IMR-90 (cell line): ENCODE measurements at regions of chr18 and their contacts with region 1.

Region 1: DNA sequence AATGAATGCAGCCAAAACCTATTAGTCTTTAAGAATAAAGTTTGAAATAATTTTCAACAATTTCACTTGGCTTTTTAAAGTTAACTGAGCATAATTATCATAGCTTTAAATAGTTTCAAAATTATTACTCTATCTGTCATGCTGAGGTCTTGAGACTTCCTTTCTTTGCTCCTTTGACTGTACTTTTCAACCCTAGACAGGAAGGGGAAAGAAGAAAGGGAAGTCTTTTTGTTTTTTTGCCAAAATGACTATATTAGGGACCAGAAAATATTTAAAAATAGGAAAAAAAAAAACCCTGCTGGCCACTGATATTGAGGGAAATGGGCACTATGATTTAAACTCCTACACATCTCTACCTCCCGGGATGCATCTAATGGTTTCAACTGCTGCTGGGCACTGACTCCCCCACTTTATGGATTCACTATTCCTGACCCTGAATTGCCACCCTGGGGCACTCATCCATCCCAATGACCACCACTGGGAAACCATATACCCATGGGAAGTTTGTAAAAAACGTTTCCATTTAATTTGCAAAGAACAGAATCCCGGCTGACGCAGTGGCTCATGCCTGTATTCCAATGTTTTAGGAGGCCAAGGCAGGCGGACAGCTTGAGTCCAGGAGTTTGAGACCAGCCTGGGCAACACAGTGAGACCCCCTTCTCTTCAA is 50.5 kb downstream of the GAREM1 start:
- DNase-seq: no peak
- ATAC-seq: no peak
- H3K4me3 ChIP-seq: no peak overlapping the region
- H3K27ac ChIP-seq: no peak overlapping the region
- H3K4me1 ChIP-seq: no peaks in the 10 kb centered on the region
- H3K27me3 ChIP-seq: no peaks in the 10 kb centered on the region
- CTCF ChIP-seq: no peak
- POLR2A ChIP-seq: no peak
- RAD21 ChIP-seq: no peak

Region 2: DNA sequence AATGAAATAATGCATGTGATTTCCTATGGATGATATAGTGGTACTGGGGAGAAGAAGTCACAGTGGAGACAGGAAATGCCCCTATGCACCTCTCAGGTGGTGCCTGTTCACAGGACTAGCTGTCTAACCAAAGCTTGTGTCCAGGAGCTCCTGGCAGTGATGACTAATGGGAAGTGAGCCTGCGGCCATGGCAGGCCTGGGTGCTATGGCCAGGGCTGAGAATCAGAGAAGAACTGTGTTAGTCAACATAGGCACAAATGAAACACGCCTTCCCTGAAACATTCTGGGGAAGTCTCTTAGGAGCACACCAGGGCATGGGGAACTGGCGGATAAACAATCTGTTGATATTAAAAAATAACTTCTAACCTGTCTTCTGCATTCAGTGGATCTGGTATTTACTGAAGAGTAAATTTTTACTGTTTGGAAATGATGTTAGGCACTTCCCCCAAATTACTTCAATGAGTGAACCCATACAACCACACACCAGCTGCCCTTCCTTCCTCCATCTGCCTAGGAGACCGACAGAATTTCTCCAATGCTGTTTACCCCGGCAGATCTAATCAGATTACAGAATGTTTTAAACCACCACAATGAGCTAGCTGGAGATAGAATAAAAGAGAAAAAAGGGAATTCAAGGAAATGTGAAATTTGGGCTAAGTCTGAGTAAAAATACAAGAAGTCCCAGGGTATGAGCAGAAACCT is 163.0 kb before region 1 on chr18:
- CTCF ChIA-PET with region 1: no interaction called
- POLR2A ChIA-PET with region 1: no interaction called
- dilution Hi-C with region 1: no loop called
- in situ Hi-C with region 1: no loop called
- intact Hi-C with region 1: no loop called
- DNase-seq: no peak
- ATAC-seq: no peak
- H3K4me3 ChIP-seq: no peak overlapping the region
- H3K27ac ChIP-seq: no peak overlapping the region
- H3K4me1 ChIP-seq: no peaks in the 10 kb centered on the region
- H3K27me3 ChIP-seq: peaks cover 2% of the 10 kb centered on the region
- CTCF ChIP-seq: no peak
- POLR2A ChIP-seq: no peak
- RAD21 ChIP-seq: no peak

Region 3: DNA sequence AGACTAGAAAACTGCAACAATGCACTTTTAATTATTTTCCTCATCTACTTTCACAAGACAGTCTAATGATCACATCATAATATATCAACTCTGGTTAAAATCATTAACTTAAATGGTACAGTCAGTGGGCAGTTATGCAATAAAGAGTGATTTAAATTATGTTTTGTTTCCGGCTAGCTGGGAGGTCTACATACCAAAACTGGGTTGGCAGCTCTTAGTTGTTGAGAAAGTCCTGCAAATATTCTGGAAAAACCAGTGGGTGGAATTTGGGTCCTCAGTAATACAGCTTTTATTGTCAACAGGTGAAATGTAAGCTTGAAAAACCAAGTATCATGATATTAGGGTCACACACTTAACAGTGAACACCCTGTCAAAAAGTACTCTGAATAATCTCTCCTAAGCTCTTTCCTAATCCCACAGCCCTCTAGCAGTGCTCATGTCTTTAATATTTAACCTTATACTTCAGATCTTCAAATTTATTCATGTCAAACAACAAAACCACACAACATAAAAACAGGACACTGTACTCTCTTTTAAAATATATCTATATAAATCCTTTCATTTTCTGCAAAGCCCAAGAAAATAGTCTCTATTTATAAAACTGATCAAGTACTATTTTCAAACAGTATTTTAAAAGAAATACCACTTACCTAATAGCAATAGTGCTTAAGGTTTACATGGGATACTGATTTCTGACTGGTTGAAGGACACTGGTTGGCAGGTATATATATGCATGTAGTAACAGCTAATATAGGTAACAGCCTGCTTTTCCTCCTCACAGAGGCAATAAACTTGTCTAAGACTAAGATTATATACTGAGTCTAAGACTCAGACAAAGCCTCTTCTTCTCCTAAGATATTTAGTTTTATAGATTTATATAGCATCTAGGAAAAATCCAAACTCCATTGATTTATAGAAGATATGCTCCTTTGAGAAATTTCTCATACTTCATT is 53.4 kb before region 1 on chr18:
- CTCF ChIA-PET with region 1: no interaction called
- POLR2A ChIA-PET with region 1: interaction called, 3 read pairs
- dilution Hi-C with region 1: no loop called
- in situ Hi-C with region 1: no loop called
- intact Hi-C with region 1: loop called (anchors 5 kb)
- DNase-seq: no peak
- ATAC-seq: peak; percentile 46
- H3K4me3 ChIP-seq: no peak overlapping the region
- H3K27ac ChIP-seq: no peak overlapping the region
- H3K4me1 ChIP-seq: peaks cover 4% of the 10 kb centered on the region; the same call in 1 of the 2 replicates
- H3K27me3 ChIP-seq: no peaks in the 10 kb centered on the region
- CTCF ChIP-seq: no peak
- POLR2A ChIP-seq: no peak
- RAD21 ChIP-seq: no peak

Region 4: DNA sequence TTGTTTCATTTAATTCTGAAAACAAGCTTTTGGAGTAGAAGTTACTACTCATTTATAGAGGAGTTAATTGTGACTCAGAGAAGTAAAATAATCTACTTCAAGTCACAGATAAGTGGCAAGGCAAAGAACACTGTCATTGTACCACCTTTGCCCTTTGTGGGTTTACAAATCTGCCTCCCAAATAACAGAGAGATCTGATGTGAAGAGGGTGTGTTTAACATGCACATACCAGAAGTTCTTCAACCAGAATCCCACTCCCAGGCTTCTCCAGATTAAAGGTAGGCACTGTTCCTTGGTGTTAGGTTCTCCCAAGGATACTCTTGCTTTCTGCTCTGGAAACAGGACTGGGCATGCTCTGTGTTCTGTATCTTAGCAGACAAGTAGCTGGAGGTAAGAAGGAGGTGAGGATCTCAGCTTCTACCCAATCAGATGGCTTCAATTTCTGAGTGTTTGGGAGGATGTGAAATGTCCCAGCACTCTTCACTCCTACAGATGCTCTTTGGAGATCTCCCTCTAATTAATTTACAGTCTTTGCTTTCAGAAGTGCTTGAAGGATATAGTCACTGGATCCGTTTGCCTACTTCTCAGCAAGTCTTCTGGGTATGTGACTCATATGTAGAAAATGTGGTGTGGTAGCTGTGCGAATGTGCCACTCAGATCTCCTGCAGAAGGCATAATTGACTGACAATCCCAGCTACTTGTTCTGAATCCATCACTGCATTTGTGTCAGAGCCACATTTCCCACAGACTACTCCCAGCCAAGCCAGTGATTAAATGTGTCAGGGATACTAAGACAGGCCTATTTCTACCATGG is 241.5 kb after region 1 on chr18:
- CTCF ChIA-PET with region 1: no interaction called
- POLR2A ChIA-PET with region 1: no interaction called
- dilution Hi-C with region 1: no loop called
- in situ Hi-C with region 1: no loop called
- intact Hi-C with region 1: no loop called
- DNase-seq: no peak
- ATAC-seq: no peak
- H3K4me3 ChIP-seq: no peak overlapping the region
- H3K27ac ChIP-seq: no peak overlapping the region
- H3K4me1 ChIP-seq: no peaks in the 10 kb centered on the region
- H3K27me3 ChIP-seq: no peaks in the 10 kb centered on the region
- CTCF ChIP-seq: no peak
- POLR2A ChIP-seq: no peak
- RAD21 ChIP-seq: no peak